ENCODE measurements at regions of chr3 and their contacts with region 1.

Region 1: GRCh38 chr3:57397175-57398026 is 104.9 kb upstream of the ASB14 start:
- DNase-seq: peak; percentile 17
- ATAC-seq: peak; percentile 98
- H3K4me3 Mint-ChIP-seq: no peak overlapping the region
- H3K27ac Mint-ChIP-seq: peak overlapping the region; percentile 43
- H3K4me1 Mint-ChIP-seq: peaks cover 16% of the 10 kb centered on the region
- H3K27me3 Mint-ChIP-seq: peaks cover 3% of the 10 kb centered on the region
- CTCF ChIP-seq: peak; percentile 79

Region 2: GRCh38 chr3:57826245-57826951 is 429.0 kb after region 1 on chr3:
- CTCF ChIA-PET with region 1: interaction called, 18 read pairs
- POLR2A ChIA-PET with region 1: no interaction called
- intact Hi-C with region 1: loop called (anchors 10 kb)
- DNase-seq: no peak
- ATAC-seq: no peak
- H3K4me3 Mint-ChIP-seq: no peak overlapping the region
- H3K27ac Mint-ChIP-seq: no peak overlapping the region
- H3K4me1 Mint-ChIP-seq: peaks cover 14% of the 10 kb centered on the region
- H3K27me3 Mint-ChIP-seq: no peaks in the 10 kb centered on the region
- CTCF ChIP-seq: no peak

Region 3: GRCh38 chr3:57852896-57853295 is 455.5 kb after region 1 on chr3:
- CTCF ChIA-PET with region 1: interaction called, 12 read pairs
- POLR2A ChIA-PET with region 1: no interaction called
- intact Hi-C with region 1: loop called (anchors 1 kb)
- DNase-seq: no peak
- ATAC-seq: no peak
- H3K4me3 Mint-ChIP-seq: no peak overlapping the region
- H3K27ac Mint-ChIP-seq: no peak overlapping the region
- H3K4me1 Mint-ChIP-seq: no peaks in the 10 kb centered on the region
- H3K27me3 Mint-ChIP-seq: no peaks in the 10 kb centered on the region
- CTCF ChIP-seq: no peak

Region 4: DNA sequence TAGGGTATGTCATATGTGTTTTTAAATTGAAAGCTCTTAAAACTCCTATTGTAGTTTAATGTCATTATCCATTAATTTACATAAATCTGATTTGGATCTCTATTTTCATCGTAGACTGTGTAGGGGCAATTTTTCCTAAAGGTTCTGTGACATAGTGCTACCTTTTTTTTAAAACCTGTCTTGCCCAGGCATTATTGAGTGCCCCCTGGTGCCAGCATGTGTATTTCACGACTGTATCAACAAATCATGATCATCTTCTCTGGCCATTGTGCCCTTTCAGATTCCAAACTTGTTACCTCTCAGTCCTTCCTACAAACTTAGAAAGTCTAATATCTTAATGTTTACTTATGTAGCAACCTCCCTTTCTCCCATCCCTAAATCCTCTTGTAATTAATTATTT is 513.6 kb after region 1 on chr3:
- CTCF ChIA-PET with region 1: interaction called, 22 read pairs
- POLR2A ChIA-PET with region 1: no interaction called
- intact Hi-C with region 1: loop called (anchors 1 kb)
- DNase-seq: no peak
- ATAC-seq: no peak
- H3K4me3 Mint-ChIP-seq: no peak overlapping the region
- H3K27ac Mint-ChIP-seq: no peak overlapping the region
- H3K4me1 Mint-ChIP-seq: no peaks in the 10 kb centered on the region
- H3K27me3 Mint-ChIP-seq: no peaks in the 10 kb centered on the region
- CTCF ChIP-seq: no peak

Measured in activated B cell treated with CpG ODN at 0.5 μM for 24 hours (primary cell).